ENCODE measurements at regions of chr11 and their contacts with region 1.

Region 1: DNA sequence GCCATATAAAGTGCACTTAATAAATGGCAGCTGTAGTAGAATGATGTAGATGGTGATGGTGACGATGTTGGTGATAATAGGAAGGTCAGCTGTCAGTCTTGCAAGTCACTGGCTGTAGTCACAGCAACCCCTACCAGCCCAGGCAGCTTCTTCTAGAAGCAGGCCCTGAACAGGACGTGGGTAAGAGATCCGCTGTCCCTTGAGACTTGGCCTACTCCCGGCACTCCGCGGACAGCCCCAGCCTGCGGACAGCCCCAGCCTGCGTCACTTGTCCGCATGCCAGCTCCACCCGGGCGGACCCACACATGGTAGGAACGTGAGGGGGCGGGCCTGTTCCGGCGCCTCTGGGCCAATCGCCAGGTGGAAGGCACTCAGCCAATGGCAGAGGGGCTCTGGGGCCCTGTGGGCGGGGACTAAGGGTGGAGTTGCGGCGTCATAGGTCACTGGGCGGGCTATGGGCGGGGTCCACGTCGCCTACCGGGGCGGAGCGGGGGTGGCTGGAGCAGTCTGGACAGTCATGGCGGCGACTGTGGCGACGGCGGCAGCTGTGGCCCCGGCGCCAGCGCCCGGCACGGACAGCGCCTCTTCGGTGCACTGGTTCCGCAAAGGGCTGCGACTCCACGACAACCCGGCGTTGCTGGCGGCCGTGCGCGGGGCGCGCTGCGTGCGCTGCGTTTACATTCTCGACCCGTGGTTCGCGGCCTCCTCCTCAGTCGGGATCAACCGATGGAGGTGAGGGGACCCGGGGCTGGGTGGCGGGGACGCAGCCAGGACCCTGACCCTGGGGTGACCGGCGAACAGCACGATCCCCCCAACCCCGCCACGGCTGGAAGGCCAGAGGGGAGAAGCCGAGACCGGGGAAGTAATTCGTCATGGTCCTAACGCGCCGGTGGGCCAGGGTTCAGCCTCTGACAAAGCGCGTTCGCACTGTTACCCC is at the start of gene CRY2:
- DNase-seq: peak; percentile 97
- H3K4me3 ChIP-seq: peak within 1 kb of the TSS; percentile 88
- H3K27ac ChIP-seq: peak within 1 kb of the TSS; percentile 80
- H3K27me3 ChIP-seq: peaks cover 3% of the 10 kb centered on the region
- CTCF ChIP-seq: no peak
- polyA plus RNA-seq, gene CRY2: 11.7 and 13.3 TPM in 2 replicates

Region 2: DNA sequence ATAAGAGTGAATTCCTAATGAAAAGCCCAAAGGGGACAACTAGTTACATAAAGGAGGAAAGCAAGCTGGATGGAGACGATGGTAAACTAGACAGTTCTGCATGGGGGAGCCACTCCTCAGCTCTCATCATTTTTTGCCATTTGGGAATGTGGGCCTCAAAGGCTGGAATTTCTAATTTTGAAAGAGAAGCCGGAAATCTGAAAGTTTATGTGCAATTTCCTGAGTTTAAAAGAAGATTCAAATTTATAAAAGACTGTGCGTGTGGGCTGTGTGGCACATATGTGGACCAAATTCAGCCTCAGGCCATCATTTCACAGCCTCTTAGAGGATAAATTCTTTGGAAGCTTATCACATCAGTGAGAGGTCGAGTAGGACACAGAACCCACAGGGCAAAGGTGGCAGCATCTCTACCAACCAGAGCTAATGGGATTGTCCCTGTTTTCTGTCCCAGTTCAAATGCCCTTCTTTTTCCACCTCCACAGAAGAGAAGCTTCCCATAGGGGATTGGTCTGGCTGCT is 18.2 kb before region 1 on chr11:
- CTCF ChIA-PET with region 1: interaction called, 31 read pairs
- POLR2A ChIA-PET with region 1: interaction called, 4 read pairs
- DNase-seq: no peak
- H3K4me3 ChIP-seq: no peak overlapping the region
- H3K27ac ChIP-seq: no peak overlapping the region
- H3K27me3 ChIP-seq: peaks cover 43% of the 10 kb centered on the region
- CTCF ChIP-seq: no peak

Region 3: DNA sequence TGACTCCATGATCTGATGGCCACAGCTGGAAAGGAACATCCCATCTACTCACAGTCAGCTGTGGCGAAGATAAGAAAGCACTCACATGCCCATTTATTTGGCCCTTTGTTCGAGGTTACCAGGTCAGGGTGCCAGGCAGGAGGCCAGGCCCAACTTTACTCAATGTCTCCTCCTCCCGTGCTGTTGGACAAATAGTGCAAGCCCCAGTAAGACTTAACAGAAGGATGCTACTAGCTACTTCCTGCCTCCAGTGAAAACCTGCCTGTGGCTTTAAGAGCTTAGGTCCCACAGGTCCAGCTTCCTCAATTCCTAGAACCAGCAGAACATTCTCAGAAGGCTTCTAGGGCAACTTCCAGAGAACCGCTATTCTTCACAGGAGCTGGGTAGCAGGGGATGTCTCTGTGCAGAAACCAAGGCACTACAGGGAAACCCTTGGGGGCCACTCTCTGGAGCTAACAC is 12.9 kb before region 1 on chr11:
- CTCF ChIA-PET with region 1: interaction called, 31 read pairs
- POLR2A ChIA-PET with region 1: no interaction called
- DNase-seq: no peak
- H3K4me3 ChIP-seq: no peak overlapping the region
- H3K27ac ChIP-seq: no peak overlapping the region
- H3K27me3 ChIP-seq: peaks cover 28% of the 10 kb centered on the region
- CTCF ChIP-seq: no peak

Region 4: GRCh38 chr11:45859661-45860140 is 12.5 kb after region 1 on chr11:
- CTCF ChIA-PET with region 1: interaction called, 71 read pairs
- POLR2A ChIA-PET with region 1: interaction called, 24 read pairs
- DNase-seq: peak; percentile 99
- H3K4me3 ChIP-seq: 0 out of 2 replicates have a peak overlapping the region, but pooled peaks have one; percentile 1
- H3K27ac ChIP-seq: peak overlapping the region; percentile 95
- H3K27me3 ChIP-seq: no peaks in the 10 kb centered on the region
- CTCF ChIP-seq: no peak

Region 5: GRCh38 chr11:45872513-45873356 is 25.5 kb after region 1 on chr11:
- CTCF ChIA-PET with region 1: interaction called, 23 read pairs
- POLR2A ChIA-PET with region 1: interaction called, 7 read pairs
- DNase-seq: peak; percentile 61
- H3K4me3 ChIP-seq: no peak overlapping the region
- H3K27ac ChIP-seq: peak overlapping the region; percentile 78
- H3K27me3 ChIP-seq: no peaks in the 10 kb centered on the region
- CTCF ChIP-seq: peak; percentile 83

Region 6: GRCh38 chr11:46006418-46007070 is 159.3 kb after region 1 on chr11:
- CTCF ChIA-PET with region 1: interaction called, 12 read pairs
- POLR2A ChIA-PET with region 1: no interaction called
- DNase-seq: peak; percentile 66
- H3K4me3 ChIP-seq: no peak overlapping the region
- H3K27ac ChIP-seq: no peak overlapping the region
- H3K27me3 ChIP-seq: no peaks in the 10 kb centered on the region
- CTCF ChIP-seq: peak; percentile 81

Measured in AG04450 (cell line).